B cell (primary cell): ENCODE measurements at regions of chr2 and their contacts with region 1.

Region 1: DNA sequence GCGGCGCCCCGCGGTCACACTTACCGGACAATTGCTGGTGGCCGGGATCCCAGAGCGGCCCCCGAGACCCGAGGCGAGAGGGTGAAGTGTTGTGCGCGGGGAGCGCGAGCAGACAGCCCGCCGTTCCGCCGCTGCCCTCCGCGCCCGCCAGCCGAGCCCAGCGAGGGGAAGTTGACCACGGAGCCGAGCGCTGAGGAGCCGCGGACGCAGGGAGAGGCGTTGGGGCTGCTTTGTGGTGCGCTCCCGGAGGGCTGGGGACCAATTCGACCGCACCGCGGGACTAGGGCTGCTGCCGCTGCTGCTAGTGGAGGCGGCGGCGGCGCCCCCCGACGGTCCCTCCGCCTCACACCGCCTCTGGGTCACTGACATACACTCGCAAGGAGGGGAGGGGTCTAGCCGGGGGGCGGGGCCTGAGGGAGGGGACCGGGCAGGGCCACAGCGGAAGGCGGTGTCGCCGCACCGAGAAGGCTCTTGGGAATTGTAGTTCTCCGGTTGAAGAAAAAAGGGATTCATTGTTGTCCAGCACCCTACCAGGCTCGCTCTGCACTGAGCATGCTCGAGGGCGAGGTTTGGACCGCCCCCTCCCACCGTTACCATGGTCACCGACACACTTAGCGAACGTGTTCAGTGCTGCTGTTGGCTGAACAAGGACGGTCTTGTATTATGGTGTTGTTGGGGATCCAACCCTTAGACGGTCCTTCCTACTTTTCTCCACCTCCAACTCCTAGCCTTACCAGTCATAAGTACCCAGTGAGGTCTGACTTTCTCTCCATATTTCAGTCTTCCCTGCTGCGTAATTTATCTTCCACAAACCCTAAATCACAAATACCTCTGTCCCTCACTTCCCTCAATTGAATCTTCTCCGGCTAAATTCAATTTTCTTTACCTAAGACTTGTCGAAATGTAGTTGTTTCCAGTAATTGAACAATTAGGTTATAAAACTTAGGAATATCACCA is at the start of gene PELI1:
- DNase-seq: peak; percentile 95
- ATAC-seq: peak; percentile 95
- H3K4me3 ChIP-seq: peak within 1 kb of the TSS; percentile 77 to 98 (median 85)
- H3K4me3 Mint-ChIP-seq: peak within 1 kb of the TSS; percentile 92
- H3K27ac ChIP-seq: peak within 1 kb of the TSS; percentile 81 to 86
- H3K27ac Mint-ChIP-seq: peak within 1 kb of the TSS; percentile 94
- H3K4me1 ChIP-seq: peaks cover 22 to 32% of the 10 kb centered on the region in 2 donors
- H3K4me1 Mint-ChIP-seq: peaks cover 38% of the 10 kb centered on the region
- H3K27me3 ChIP-seq: no peaks in the 10 kb centered on the region
- H3K27me3 Mint-ChIP-seq: no peaks in the 10 kb centered on the region
- CTCF ChIP-seq: peak; percentile 10
- total RNA-seq, gene PELI1: 115 and 117 TPM in 2 replicates

Region 2: DNA sequence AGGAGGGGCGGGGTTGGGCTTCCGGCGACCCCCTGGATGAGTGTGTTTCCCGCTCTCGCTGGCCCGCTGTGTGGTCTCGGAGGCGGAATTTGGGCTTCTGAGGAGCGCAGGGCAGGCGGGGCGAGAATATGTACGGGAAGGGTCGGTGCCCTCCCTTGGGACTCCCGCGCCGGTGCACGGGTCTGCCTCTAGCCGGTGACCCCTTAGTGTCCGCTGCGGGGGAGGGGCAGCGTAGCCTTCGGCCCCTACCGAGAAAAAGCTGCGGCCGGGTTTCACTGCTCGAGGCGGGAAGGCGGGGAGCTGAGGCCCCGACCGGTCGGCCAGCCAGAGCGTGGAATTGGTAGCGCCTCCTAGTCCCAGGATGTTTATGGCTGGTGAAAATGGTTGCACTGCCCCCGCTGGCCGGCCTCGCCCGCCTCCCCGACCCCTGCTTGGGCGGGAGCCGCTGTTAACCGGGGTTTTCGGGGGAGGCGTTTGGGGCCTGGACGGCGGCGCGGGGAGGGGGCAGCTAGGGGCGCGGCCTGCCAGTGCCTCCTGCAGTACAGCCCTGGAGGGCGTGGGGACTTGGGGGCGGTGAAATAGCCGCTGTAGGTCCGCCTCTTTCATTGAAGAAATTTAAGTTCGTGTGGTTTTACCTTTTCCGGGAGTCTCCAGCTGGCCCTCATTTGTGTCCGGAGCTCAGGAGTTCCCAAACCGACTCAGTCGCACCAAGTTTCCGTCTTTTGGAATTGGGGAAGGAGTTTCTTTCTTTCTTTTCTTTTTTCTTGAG is 302.9 kb before region 1 on chr2 and contains the start of gene UGP2:
- CTCF ChIA-PET with region 1: no interaction called
- POLR2A ChIA-PET with region 1: no interaction called
- intact Hi-C with region 1: loop called (anchors 5 kb)
- DNase-seq: peak; percentile 88
- ATAC-seq: peak; percentile 60
- H3K4me3 ChIP-seq: peak within 1 kb of the TSS; percentile 86 to 98 (median 96)
- H3K4me3 Mint-ChIP-seq: peak within 1 kb of the TSS; percentile 98
- H3K27ac ChIP-seq: peak within 1 kb of the TSS; percentile 82 to 91
- H3K27ac Mint-ChIP-seq: peak within 1 kb of the TSS; percentile 95
- H3K4me1 ChIP-seq: peaks cover 19 to 20% of the 10 kb centered on the region in 2 donors
- H3K4me1 Mint-ChIP-seq: peaks cover 51% of the 10 kb centered on the region
- H3K27me3 ChIP-seq: no peaks in the 10 kb centered on the region
- H3K27me3 Mint-ChIP-seq: no peaks in the 10 kb centered on the region
- CTCF ChIP-seq: no peak
- total RNA-seq, gene UGP2: 61.5 and 68.8 TPM in 2 replicates

Region 3: DNA sequence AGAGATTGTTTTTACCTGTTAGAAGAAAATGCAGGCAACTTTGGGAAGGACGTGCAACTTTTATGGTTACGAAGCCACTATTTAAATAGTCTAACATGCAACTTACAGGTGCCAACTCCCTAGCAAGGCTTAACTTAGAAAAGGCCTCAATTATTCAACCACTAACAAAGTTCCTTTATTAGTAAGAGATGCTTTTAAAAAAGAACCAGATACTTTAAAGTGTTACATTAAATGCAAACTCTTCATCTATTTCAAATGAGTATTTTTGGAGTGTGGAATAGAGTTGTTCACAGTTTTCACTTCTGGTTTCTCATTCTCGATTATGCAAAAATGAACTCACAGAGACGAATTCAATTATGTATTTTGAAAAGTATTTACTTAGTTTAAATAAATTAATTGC is 51.8 kb before region 1 on chr2:
- CTCF ChIA-PET with region 1: no interaction called
- POLR2A ChIA-PET with region 1: no interaction called
- intact Hi-C with region 1: loop called (anchors 2 kb)
- DNase-seq: peak; percentile 26
- ATAC-seq: no peak
- H3K4me3 ChIP-seq: peak overlapping the region in 2 of 5 experiments; percentile 6 to 38
- H3K4me3 Mint-ChIP-seq: peak overlapping the region; percentile 66
- H3K27ac ChIP-seq: peak overlapping the region; percentile 54 to 66
- H3K27ac Mint-ChIP-seq: peak overlapping the region; percentile 75
- H3K4me1 ChIP-seq: peaks cover 39 to 40% of the 10 kb centered on the region in 2 donors
- H3K4me1 Mint-ChIP-seq: peaks cover 58% of the 10 kb centered on the region
- H3K27me3 ChIP-seq: no peaks in the 10 kb centered on the region
- H3K27me3 Mint-ChIP-seq: no peaks in the 10 kb centered on the region
- CTCF ChIP-seq: no peak

Region 4: GRCh38 chr2:64214281-64215115 is 70.2 kb after region 1 on chr2:
- CTCF ChIA-PET with region 1: interaction called, 3 read pairs
- POLR2A ChIA-PET with region 1: no interaction called
- intact Hi-C with region 1: loop called (anchors 1 kb)
- DNase-seq: peak; percentile 83
- ATAC-seq: peak; percentile 75
- H3K4me3 ChIP-seq: peak overlapping the region in 4 of 5 experiments; percentile 7 to 48 (median 26)
- H3K4me3 Mint-ChIP-seq: peak overlapping the region; percentile 80
- H3K27ac ChIP-seq: peak overlapping the region; percentile 89 to 98
- H3K27ac Mint-ChIP-seq: peak overlapping the region; percentile 99
- H3K4me1 ChIP-seq: peaks cover 59 to 69% of the 10 kb centered on the region in 2 donors
- H3K4me1 Mint-ChIP-seq: peaks cover 62% of the 10 kb centered on the region
- H3K27me3 ChIP-seq: no peaks in the 10 kb centered on the region
- H3K27me3 Mint-ChIP-seq: no peaks in the 10 kb centered on the region
- CTCF ChIP-seq: no peak

Region 5: DNA sequence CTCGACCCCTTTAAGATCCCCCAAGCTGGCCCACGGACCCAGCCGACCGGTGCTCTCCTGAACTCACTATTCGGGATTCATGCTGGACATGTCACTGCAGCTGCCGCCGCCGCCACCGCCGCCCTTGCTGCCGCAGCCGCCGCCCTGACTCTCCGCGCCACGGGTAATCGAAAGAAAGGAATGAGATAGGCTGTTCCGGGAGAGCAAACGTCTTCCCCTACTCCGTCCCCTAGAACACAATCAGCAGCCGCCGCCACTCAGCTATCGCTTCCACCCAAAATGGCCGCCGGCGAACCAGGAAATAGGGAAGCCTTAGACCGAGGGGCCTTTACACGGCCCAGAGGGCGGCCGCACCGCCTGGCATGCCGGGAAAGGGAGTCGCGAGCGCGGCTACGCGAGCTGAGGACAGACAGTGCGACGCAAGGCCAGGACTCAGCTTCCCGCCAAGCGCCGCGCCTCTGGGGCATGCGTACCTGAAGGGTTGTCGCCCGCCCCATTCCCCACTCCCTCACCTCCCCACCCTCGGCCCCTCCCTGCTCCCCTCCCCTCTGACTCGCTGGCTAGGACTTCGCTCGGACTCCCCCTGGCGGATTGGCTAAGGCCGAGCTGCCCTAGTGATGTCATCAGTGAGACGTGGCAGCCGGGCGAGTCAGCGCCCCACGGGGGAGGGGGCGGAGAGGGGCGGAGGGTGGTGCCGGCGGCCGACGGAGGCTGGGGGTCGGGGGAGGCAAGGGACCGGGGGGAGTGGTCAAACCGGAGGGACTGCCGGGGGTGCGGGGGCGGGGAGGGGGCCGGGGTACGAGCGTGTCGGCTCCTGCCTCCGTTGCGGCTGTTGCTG is 985.7 kb after region 1 on chr2 and contains the start of gene RAB1A:
- CTCF ChIA-PET with region 1: no interaction called
- POLR2A ChIA-PET with region 1: no interaction called
- intact Hi-C with region 1: loop called (anchors 2 kb)
- DNase-seq: peak; percentile 99
- ATAC-seq: peak; percentile 88
- H3K4me3 ChIP-seq: peak within 1 kb of the TSS; percentile 96 to 97 (median 97)
- H3K4me3 Mint-ChIP-seq: peak within 1 kb of the TSS; percentile 100
- H3K27ac ChIP-seq: peak within 1 kb of the TSS; percentile 94 to 98
- H3K27ac Mint-ChIP-seq: peak within 1 kb of the TSS; percentile 100
- H3K4me1 ChIP-seq: peaks cover 23 to 25% of the 10 kb centered on the region in 2 donors
- H3K4me1 Mint-ChIP-seq: peaks cover 38% of the 10 kb centered on the region
- H3K27me3 ChIP-seq: no peaks in the 10 kb centered on the region
- H3K27me3 Mint-ChIP-seq: no peaks in the 10 kb centered on the region
- CTCF ChIP-seq: no peak
- total RNA-seq, gene RAB1A: 42.2 and 43.7 TPM in 2 replicates